A673 (cell line): ENCODE measurements at regions of chr11 and their contacts with region 1.

Region 1: DNA sequence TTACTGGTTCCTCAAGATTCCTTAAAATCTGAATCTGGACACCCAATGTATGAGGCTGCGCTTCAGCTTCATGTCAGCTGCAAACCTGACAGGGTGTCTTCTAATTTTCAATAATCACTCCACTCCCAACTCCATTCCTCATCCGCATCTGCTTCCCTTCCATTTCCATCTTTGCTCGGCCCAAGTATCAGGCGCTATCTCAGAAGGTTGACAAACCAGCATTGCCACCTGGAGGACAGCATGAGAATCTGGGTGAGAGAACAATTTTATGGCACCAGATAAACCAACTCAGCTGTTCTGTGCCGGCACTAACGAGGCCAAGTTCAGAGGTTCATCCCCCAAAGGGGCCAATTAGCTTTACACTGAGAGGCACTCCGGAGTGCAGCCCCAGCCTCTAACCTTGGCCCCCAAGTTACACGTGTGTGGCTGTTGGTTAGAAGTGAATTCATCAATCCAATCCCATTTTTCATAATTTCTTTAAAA is 79.1 kb upstream of the LMO2 start:
- DNase-seq: peak; percentile 96
- H3K4me3 ChIP-seq: no peak overlapping the region
- H3K27ac ChIP-seq: peak overlapping the region; percentile 31
- H3K4me1 ChIP-seq: peaks cover 26% of the 10 kb centered on the region
- H3K27me3 ChIP-seq: no peaks in the 10 kb centered on the region
- CTCF ChIP-seq: peak; percentile 99

Region 2: GRCh38 chr11:33808228-33808828 is 162.7 kb before region 1 on chr11:
- CTCF ChIA-PET with region 1: interaction called, 16 read pairs
- POLR2A ChIA-PET with region 1: no interaction called
- intact Hi-C with region 1: no loop called
- DNase-seq: peak; percentile 98
- H3K4me3 ChIP-seq: no peak overlapping the region
- H3K27ac ChIP-seq: no peak overlapping the region
- H3K4me1 ChIP-seq: peaks cover 4% of the 10 kb centered on the region
- H3K27me3 ChIP-seq: no peaks in the 10 kb centered on the region
- CTCF ChIP-seq: peak; percentile 100

Region 3: GRCh38 chr11:33857933-33858371 is 113.1 kb before region 1 on chr11:
- CTCF ChIA-PET with region 1: interaction called, 53 read pairs
- POLR2A ChIA-PET with region 1: no interaction called
- intact Hi-C with region 1: loop called (anchors 1 kb)
- DNase-seq: peak; percentile 97
- H3K4me3 ChIP-seq: no peak overlapping the region
- H3K27ac ChIP-seq: peak overlapping the region; percentile 24
- H3K4me1 ChIP-seq: peaks cover 65% of the 10 kb centered on the region
- H3K27me3 ChIP-seq: no peaks in the 10 kb centered on the region
- CTCF ChIP-seq: peak; percentile 100

Region 4: GRCh38 chr11:34013898-34014571 is 43.0 kb after region 1 on chr11:
- CTCF ChIA-PET with region 1: no interaction called
- POLR2A ChIA-PET with region 1: interaction called, 10 read pairs
- intact Hi-C with region 1: no loop called
- DNase-seq: no peak
- H3K4me3 ChIP-seq: no peak overlapping the region
- H3K27ac ChIP-seq: peak overlapping the region; percentile 0
- H3K4me1 ChIP-seq: no peaks in the 10 kb centered on the region
- H3K27me3 ChIP-seq: no peaks in the 10 kb centered on the region
- CTCF ChIP-seq: no peak

Region 5: GRCh38 chr11:34349882-34350281 is 378.9 kb after region 1 on chr11:
- CTCF ChIA-PET with region 1: interaction called, 13 read pairs
- POLR2A ChIA-PET with region 1: no interaction called
- intact Hi-C with region 1: no loop called
- DNase-seq: no peak
- H3K4me3 ChIP-seq: no peak overlapping the region
- H3K27ac ChIP-seq: no peak overlapping the region
- H3K4me1 ChIP-seq: peaks cover 53% of the 10 kb centered on the region
- H3K27me3 ChIP-seq: no peaks in the 10 kb centered on the region
- CTCF ChIP-seq: no peak